Ovary (tissue), 10 donors: ENCODE measurements at regions of chr11 and their contacts with region 1.

Region 1: GRCh38 chr11:68459886-68460740 is 439 bp upstream of the PPP6R3 start:
- DNase-seq: peak; percentile 98 to 99 (median 98)
- H3K4me3 ChIP-seq: peak overlapping the region; percentile 99
- H3K27ac ChIP-seq: peak overlapping the region; percentile 83 to 95
- H3K4me1 ChIP-seq: peaks cover 12% of the 10 kb centered on the region
- H3K27me3 ChIP-seq: no peaks in the 10 kb centered on the region
- CTCF ChIP-seq: peak in 1 of 3 donors; percentile 40
- EP300 ChIP-seq: peak; percentile 39
- POLR2A ChIP-seq: no peak

Region 2: DNA sequence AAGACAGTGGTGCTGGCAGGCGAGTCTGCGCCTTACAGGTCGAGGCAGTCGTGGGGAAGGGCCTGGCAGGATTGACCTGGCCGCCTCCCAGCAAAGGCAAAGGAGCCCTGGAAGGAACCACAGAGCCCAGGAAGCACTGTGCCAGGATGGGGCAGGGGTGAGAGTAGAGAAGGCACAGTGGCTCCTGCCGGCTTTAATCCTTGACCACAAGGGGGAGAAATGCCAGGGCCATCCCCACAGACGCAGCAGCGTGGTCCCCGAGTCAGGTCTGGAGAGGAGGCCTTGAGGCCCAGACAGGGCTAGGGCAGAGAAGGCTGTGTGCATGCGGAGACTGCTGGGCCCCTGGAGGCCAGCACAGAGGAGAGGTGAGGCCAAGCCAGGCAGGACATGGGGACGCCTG is 439.5 kb before region 1 on chr11:
- intact Hi-C with region 1: loop called in 1 of 4 experiments (anchors 10 kb)
- DNase-seq: no peak
- H3K4me3 ChIP-seq: no peak overlapping the region
- H3K27ac ChIP-seq: no peak overlapping the region
- H3K4me1 ChIP-seq: no peaks in the 10 kb centered on the region
- H3K27me3 ChIP-seq: no peaks in the 10 kb centered on the region
- CTCF ChIP-seq: no peak
- EP300 ChIP-seq: no peak
- POLR2A ChIP-seq: no peak

Region 3: DNA sequence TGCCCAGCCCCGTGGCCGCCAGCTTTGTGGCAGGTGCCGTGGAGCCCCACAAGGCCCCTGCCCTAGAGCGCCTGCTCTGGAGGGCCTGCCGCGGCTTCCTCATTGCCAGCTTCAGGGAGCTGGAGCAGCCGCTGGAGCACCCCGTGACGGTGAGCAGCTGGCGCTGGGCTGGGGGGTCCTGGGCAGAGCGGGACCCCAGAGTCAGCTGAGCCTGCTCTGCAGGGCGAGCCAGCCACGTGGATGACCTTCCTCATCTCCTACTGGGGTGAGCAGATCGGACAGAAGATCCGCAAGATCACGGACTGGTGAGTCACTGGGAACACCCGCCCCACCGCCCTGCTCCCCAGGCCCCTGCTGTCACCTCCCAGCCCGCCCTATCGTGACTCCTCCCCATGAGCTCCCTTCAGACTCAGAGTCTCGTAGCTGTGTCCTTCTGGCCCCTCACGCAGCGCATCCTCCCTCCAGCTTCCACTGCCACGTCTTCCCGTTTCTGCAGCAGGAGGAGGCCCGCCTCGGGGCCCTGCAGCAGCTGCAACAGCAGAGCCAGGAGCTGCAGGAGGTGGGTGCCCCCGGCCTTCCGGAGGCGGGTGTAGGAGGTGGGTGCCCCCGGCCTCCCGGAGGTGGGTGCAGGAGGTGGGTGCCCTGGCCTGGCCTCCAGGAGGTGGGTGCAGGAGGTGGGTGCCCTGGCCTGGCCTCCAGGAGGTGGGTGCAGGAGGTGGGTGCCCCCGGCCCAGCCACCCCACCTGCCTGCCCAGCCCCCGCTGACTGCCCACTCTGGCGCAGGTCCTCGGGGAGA is 416.6 kb before region 1 on chr11:
- intact Hi-C with region 1: no loop called
- DNase-seq: peak in 3 of 5 donors; percentile 22 to 33 (median 27)
- H3K4me3 ChIP-seq: no peak overlapping the region
- H3K27ac ChIP-seq: peak overlapping the region in 1 of 2 donors; percentile 30
- H3K4me1 ChIP-seq: peaks cover 4% of the 10 kb centered on the region
- H3K27me3 ChIP-seq: no peaks in the 10 kb centered on the region
- CTCF ChIP-seq: no peak
- EP300 ChIP-seq: no peak
- POLR2A ChIP-seq: no peak

Region 4: DNA sequence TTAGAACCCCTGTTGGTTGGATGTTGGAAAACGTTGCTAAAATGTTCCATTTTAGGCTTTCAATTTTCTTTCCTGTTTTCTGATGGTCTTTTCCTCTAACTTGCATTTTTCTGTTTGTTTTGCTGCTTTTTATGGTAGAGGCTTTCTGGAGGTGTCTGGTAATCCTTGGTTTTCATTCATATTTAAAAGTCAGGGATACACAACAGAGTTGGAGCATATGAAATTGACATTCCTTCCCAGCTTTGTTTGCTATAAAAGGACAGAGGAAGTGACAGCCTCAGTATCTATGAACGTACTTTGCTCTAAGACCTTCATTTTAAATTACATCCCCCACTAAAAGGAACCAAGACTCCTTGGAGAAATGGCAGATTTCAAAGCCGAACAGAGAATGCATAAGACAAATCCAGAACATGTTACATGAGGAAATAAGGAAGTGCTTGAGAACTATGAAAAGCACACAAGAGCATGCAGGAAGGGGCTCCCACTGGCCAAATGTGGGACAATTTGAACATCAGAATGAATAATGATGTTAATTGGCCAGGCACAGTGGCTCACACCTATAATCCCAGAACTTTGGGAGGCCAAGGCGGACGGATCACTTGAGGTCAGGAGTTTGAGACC is 57.1 kb after region 1 on chr11:
- intact Hi-C with region 1: loop called in 1 of 4 experiments (anchors 10 kb)
- DNase-seq: no peak
- H3K4me3 ChIP-seq: no peak overlapping the region
- H3K27ac ChIP-seq: no peak overlapping the region
- H3K4me1 ChIP-seq: no peaks in the 10 kb centered on the region
- H3K27me3 ChIP-seq: no peaks in the 10 kb centered on the region
- CTCF ChIP-seq: no peak
- EP300 ChIP-seq: no peak
- POLR2A ChIP-seq: no peak

Region 5: GRCh38 chr11:68855205-68855981 is 395.3 kb after region 1 on chr11:
- intact Hi-C with region 1: loop called in 1 of 4 experiments (anchors 10 kb)
- DNase-seq: peak; percentile 28 to 78 (median 56)
- H3K4me3 ChIP-seq: peak overlapping the region; percentile 44
- H3K27ac ChIP-seq: no peak overlapping the region
- H3K4me1 ChIP-seq: peaks cover 2% of the 10 kb centered on the region
- H3K27me3 ChIP-seq: no peaks in the 10 kb centered on the region
- CTCF ChIP-seq: no peak
- EP300 ChIP-seq: no peak
- POLR2A ChIP-seq: no peak